ENCODE measurements at regions of chr12 and their contacts with region 1.

Region 1: DNA sequence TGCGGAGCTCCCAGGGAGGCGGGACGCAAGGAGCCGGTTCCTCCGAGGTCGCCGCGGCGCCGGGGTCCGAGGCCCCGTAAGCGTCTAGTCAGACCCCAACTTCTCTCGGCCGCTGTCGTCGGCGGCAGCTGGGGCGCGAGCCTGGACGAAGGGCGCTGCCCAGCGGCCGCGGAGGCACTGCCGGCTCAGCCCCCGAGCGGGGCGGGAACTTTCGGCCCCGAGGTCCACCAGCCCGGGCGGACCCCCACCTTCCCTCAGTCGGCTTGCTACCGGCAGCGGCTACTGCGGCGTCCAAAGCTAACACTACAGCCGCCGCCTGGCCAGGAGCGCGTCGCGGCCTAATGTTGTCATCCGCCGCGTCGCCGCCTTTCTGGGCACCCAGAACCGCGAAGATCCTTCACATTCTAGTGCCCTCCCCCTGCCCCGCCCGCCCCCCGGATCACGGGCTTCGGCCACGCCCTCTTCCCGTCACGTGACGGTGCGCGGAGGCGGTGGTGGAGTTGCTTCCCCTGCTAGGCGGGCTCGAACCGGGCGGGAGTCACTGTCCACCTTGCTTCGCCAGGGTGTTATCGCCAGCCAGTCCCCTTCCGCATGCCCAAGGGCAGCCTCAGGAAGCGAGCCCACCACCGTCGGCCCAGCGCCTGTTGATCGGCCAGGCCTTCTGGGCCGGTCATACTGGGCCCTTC is at the start of gene OSBPL8:
- DNase-seq: peak; percentile 91
- H3K4me3 Mint-ChIP-seq: peak within 1 kb of the TSS; percentile 94
- H3K27ac Mint-ChIP-seq: peak within 1 kb of the TSS; percentile 98
- H3K4me1 Mint-ChIP-seq: peaks cover 49% of the 10 kb centered on the region
- H3K27me3 Mint-ChIP-seq: no peaks in the 10 kb centered on the region
- total RNA-seq, gene OSBPL8: 86.9 and 95.9 TPM in 2 replicates

Region 2: GRCh38 chr12:75511116-75512048 is 1048.2 kb before region 1 on chr12 and contains the start of gene KRR1:
- intact Hi-C with region 1: loop called (anchors 2 kb)
- DNase-seq: peak; percentile 89
- H3K4me3 Mint-ChIP-seq: peak within 1 kb of the TSS; percentile 97
- H3K27ac Mint-ChIP-seq: peak within 1 kb of the TSS; percentile 98
- H3K4me1 Mint-ChIP-seq: peaks cover 45% of the 10 kb centered on the region
- H3K27me3 Mint-ChIP-seq: peaks cover 3% of the 10 kb centered on the region
- total RNA-seq, gene KRR1: 130 and 137 TPM in 2 replicates

Region 3: DNA sequence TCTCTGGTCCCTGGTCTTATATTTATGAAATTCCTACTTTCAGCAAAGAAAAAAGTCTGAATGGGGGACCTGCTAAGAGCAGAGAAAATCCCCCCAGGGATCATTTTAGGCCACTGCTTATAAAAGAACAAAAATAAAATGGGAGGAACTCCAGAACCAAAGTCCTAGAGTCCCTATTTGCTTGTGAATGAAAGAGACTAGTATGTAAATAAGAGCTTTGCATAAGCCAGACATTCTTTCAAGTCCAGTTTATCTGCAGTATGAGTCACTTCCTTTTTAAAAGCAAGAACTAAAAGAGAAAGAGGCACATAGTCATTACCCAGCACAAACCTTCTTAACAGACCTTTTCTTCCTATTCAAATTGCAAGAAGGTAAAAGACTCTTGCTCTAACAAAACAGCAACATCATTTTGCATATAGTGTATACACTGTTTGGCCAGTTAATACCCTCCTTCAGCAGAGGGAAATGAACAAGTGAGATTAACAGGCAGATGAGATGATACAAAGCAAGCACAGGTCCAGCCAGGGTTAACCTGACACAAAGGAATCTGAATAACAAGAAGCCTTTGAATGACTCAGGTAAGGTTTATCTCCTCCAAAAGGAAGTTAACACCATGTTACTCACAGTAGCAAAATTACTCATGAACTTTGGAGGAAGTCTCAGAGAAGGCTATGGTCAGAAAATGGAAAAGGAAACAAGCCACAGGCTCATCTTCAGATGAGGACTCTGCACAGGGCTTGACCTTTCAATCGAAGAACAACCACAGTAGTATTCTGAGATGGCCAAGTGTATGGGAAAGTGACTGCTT is 615.2 kb before region 1 on chr12:
- intact Hi-C with region 1: loop called (anchors 2 kb)
- DNase-seq: peak; percentile 27
- H3K4me3 Mint-ChIP-seq: peak overlapping the region; percentile 65
- H3K27ac Mint-ChIP-seq: peak overlapping the region; percentile 98
- H3K4me1 Mint-ChIP-seq: peaks cover 30% of the 10 kb centered on the region
- H3K27me3 Mint-ChIP-seq: no peaks in the 10 kb centered on the region

Region 4: DNA sequence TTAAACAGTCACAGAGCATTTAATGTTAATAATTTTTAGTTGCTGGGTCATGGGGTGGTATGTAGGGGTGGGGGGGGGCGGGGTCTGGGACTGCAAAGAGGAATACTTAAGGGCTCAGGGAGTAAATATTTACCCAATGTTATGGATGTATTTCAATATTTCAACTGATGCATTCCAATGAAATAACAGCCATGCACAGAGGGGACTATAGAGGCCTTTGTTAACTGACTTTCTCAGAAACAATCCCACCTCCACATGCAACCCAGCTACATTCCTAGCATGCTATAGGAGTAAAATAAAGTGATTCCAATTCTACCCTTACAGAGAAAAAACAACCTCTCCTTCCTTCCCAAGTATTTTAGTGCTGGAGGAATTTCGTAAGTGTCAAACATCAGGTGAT is 203.4 kb before region 1 on chr12:
- intact Hi-C with region 1: no loop called
- DNase-seq: no peak
- H3K4me3 Mint-ChIP-seq: no peak overlapping the region
- H3K27ac Mint-ChIP-seq: no peak overlapping the region
- H3K4me1 Mint-ChIP-seq: no peaks in the 10 kb centered on the region
- H3K27me3 Mint-ChIP-seq: no peaks in the 10 kb centered on the region

Region 5: GRCh38 chr12:76455582-76456345 is 103.8 kb before region 1 on chr12:
- intact Hi-C with region 1: loop called (anchors 5 kb)
- DNase-seq: peak; percentile 5
- H3K4me3 Mint-ChIP-seq: no peak overlapping the region
- H3K27ac Mint-ChIP-seq: no peak overlapping the region
- H3K4me1 Mint-ChIP-seq: peaks cover 15% of the 10 kb centered on the region
- H3K27me3 Mint-ChIP-seq: no peaks in the 10 kb centered on the region

Region 6: GRCh38 chr12:76591476-76591875 is 31.9 kb after region 1 on chr12:
- intact Hi-C with region 1: no loop called
- DNase-seq: no peak
- H3K4me3 Mint-ChIP-seq: no peak overlapping the region
- H3K27ac Mint-ChIP-seq: no peak overlapping the region
- H3K4me1 Mint-ChIP-seq: peaks cover 21% of the 10 kb centered on the region
- H3K27me3 Mint-ChIP-seq: peaks cover 2% of the 10 kb centered on the region

Region 7: GRCh38 chr12:76763743-76764675 is 204.5 kb after region 1 on chr12 and contains the start of gene ZDHHC17:
- intact Hi-C with region 1: loop called (anchors 1 kb)
- DNase-seq: peak; percentile 91
- H3K4me3 Mint-ChIP-seq: peak within 1 kb of the TSS; percentile 98
- H3K27ac Mint-ChIP-seq: peak within 1 kb of the TSS; percentile 94
- H3K4me1 Mint-ChIP-seq: peaks cover 19% of the 10 kb centered on the region
- H3K27me3 Mint-ChIP-seq: peaks cover 3% of the 10 kb centered on the region
- total RNA-seq, gene ZDHHC17: 23.3 and 32.3 TPM in 2 replicates

Measured in activated T-helper 1 cell treated with anti-CD3 and anti-CD28 coated beads, Interleukin-12 subunit alpha, Interleukin-12 subunit beta, Interleukin-2, Interleukin-4 antibody, amounts not matched to agents 30 ng/mL and 10 ng/mL and 1 ng/mL, durations not matched to agents 14 hours and 24 hours and 36 hours (primary cell).